ENCODE measurements at regions of chr7 and their contacts with region 1.

Region 1: GRCh38 chr7:31488562-31489203 is 25.2 kb upstream of the ITPRID1 start:
- DNase-seq: peak in 2 of 9 donors; percentile 8 to 47
- ATAC-seq: no peak
- H3K4me3 ChIP-seq: no peak overlapping the region
- H3K4me3 Mint-ChIP-seq: no peak overlapping the region
- H3K27ac ChIP-seq: no peak overlapping the region
- H3K27ac Mint-ChIP-seq: no peak overlapping the region
- H3K4me1 ChIP-seq: no peaks in the 10 kb centered on the region
- H3K4me1 Mint-ChIP-seq: no peaks in the 10 kb centered on the region
- H3K27me3 ChIP-seq: no peaks in the 10 kb centered on the region
- H3K27me3 Mint-ChIP-seq: peaks cover 0 to 4% (median 0%) of the 10 kb centered on the region in 5 donors

Region 2: GRCh38 chr7:31443457-31443856 is 45.2 kb before region 1 on chr7:
- CTCF ChIA-PET with region 1: no interaction called
- POLR2A ChIA-PET with region 1: no interaction called
- intact Hi-C with region 1: loop called in 1 of 2 experiments (anchors 1 kb)
- DNase-seq: no peak
- ATAC-seq: peak; percentile 47
- H3K4me3 ChIP-seq: no peak overlapping the region
- H3K4me3 Mint-ChIP-seq: no peak overlapping the region
- H3K27ac ChIP-seq: no peak overlapping the region
- H3K27ac Mint-ChIP-seq: no peak overlapping the region
- H3K4me1 ChIP-seq: no peaks in the 10 kb centered on the region
- H3K4me1 Mint-ChIP-seq: no peaks in the 10 kb centered on the region
- H3K27me3 ChIP-seq: no peaks in the 10 kb centered on the region
- H3K27me3 Mint-ChIP-seq: peaks cover 0 to 7% (median 3%) of the 10 kb centered on the region in 5 donors

Region 3: DNA sequence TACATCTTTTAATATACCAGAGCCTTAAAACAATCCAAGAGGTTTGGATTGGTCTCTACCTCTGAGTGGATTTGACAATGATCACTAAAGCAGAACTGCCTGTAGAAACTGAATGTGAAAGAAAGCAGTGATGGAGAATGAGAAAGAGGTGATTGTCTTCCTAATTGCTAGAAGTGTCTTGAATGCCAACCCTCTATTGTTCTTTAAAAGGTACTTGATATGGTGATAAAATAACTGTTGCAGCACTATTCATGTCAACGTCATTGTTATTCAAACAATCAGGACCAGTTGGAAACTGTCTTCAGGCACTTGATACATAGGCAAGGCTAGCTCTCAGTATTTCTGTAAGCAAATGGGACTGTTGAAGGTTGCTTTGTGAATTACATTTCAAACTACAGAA is 22.6 kb before region 1 on chr7:
- CTCF ChIA-PET with region 1: no interaction called
- POLR2A ChIA-PET with region 1: no interaction called
- intact Hi-C with region 1: no loop called
- DNase-seq: no peak
- ATAC-seq: no peak
- H3K4me3 ChIP-seq: no peak overlapping the region
- H3K4me3 Mint-ChIP-seq: no peak overlapping the region
- H3K27ac ChIP-seq: no peak overlapping the region
- H3K27ac Mint-ChIP-seq: no peak overlapping the region
- H3K4me1 ChIP-seq: no peaks in the 10 kb centered on the region
- H3K4me1 Mint-ChIP-seq: no peaks in the 10 kb centered on the region
- H3K27me3 ChIP-seq: no peaks in the 10 kb centered on the region
- H3K27me3 Mint-ChIP-seq: peaks cover 0 to 4% (median 0%) of the 10 kb centered on the region in 5 donors

Region 4: GRCh38 chr7:31500656-31501055 is 12.0 kb after region 1 on chr7:
- CTCF ChIA-PET with region 1: no interaction called
- POLR2A ChIA-PET with region 1: no interaction called
- intact Hi-C with region 1: no loop called
- DNase-seq: no peak
- ATAC-seq: no peak
- H3K4me3 ChIP-seq: no peak overlapping the region
- H3K4me3 Mint-ChIP-seq: no peak overlapping the region
- H3K27ac ChIP-seq: no peak overlapping the region
- H3K27ac Mint-ChIP-seq: no peak overlapping the region
- H3K4me1 ChIP-seq: no peaks in the 10 kb centered on the region
- H3K4me1 Mint-ChIP-seq: no peaks in the 10 kb centered on the region
- H3K27me3 ChIP-seq: no peaks in the 10 kb centered on the region
- H3K27me3 Mint-ChIP-seq: peaks cover 0 to 5% (median 0%) of the 10 kb centered on the region in 5 donors